ENCODE measurements at regions of chr15 and their contacts with region 1.

Region 1: DNA sequence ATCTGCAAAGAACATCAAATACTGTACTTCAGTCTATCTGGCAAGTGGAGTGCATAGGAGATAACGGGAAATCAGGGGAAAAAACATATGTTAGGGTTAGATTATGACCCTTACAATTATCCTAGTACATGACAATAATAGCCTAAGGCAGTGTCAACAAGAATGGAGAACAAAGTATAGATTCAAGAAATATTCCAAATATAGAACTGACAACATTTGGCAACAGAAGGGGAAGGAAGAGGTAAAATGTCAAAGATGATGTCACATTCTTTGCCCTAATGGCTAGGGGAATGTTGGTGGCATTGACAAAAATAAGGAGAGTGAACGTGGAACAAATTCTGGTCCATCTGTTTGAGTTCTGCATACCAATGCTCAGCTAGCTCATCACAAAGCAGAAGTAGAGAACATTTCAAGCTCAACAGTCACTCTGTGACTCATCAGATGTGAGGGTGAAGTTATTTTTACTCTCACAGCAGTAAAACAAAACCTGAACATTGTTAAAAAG is 15.5 kb upstream of the ATP8B4 start:
- DNase-seq: no peak
- H3K4me3 ChIP-seq: no peak overlapping the region
- H3K27ac ChIP-seq: peak overlapping the region; percentile 33 to 86 (median 57)
- H3K4me1 ChIP-seq: peaks cover 0 to 34% (median 20%) of the 10 kb centered on the region in 4 donors
- H3K27me3 ChIP-seq: no peaks in the 10 kb centered on the region
- CTCF ChIP-seq: no peak
- EP300 ChIP-seq: no peak
- POLR2A ChIP-seq: no peak

Region 2: DNA sequence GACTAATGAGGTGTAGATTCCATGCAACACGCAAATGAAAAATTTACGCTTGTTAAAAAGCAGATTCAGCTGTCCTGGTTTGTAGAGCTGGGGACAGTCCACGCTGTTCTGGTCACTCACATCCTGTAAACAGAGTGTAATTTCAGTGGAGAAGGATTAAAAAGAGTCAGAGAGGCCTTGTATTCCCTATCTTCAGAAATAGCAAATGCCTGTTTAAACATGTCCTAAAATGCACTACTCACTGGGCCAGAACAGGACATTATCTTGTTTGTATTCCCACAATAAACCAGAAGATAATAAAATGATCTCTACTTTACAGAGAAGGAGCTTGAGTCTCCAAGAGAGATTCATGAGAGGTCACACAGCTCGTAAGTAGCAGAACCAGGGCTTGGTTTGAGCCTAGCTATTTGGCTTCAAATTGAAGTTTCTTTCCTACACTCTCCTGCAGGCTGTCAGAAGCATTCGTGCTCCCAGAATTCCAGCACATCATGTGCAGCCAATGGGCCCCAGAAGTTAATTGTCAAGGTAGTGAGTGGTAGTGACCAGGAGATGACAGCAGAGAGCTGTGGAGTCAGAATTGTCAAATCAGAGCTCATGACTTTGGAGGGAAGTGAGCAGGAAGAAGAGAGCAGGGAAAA is 258.1 kb before region 1 on chr15:
- intact Hi-C with region 1: loop called (anchors 10 kb)
- DNase-seq: no peak
- H3K4me3 ChIP-seq: no peak overlapping the region
- H3K27ac ChIP-seq: peak overlapping the region; percentile 62 to 77 (median 74)
- H3K4me1 ChIP-seq: peaks cover 0 to 46% (median 42%) of the 10 kb centered on the region in 4 donors
- H3K27me3 ChIP-seq: no peaks in the 10 kb centered on the region
- CTCF ChIP-seq: peak in 2 of 4 experiments; percentile 27 to 45
- EP300 ChIP-seq: no peak
- POLR2A ChIP-seq: no peak

Measured in sigmoid colon (tissue), 7 donors.